ENCODE measurements at regions of chr13 and their contacts with region 1.

Region 1: GRCh38 chr13:59391696-59392095 is 772.0 kb downstream of the DIAPH3 start:
- DNase-seq: peak; percentile 58
- CTCF ChIP-seq: peak; percentile 79

Region 2: GRCh38 chr13:59337070-59337469 is 54.6 kb before region 1 on chr13:
- in situ Hi-C with region 1: no loop called
- DNase-seq: no peak
- CTCF ChIP-seq: no peak

Region 3: GRCh38 chr13:60329221-60329983 is 937.7 kb after region 1 on chr13:
- in situ Hi-C with region 1: loop called (anchors 25 kb)
- DNase-seq: peak; percentile 48
- CTCF ChIP-seq: peak; percentile 21